ENCODE measurements at regions of chr1 and their contacts with region 1.

Region 1: DNA sequence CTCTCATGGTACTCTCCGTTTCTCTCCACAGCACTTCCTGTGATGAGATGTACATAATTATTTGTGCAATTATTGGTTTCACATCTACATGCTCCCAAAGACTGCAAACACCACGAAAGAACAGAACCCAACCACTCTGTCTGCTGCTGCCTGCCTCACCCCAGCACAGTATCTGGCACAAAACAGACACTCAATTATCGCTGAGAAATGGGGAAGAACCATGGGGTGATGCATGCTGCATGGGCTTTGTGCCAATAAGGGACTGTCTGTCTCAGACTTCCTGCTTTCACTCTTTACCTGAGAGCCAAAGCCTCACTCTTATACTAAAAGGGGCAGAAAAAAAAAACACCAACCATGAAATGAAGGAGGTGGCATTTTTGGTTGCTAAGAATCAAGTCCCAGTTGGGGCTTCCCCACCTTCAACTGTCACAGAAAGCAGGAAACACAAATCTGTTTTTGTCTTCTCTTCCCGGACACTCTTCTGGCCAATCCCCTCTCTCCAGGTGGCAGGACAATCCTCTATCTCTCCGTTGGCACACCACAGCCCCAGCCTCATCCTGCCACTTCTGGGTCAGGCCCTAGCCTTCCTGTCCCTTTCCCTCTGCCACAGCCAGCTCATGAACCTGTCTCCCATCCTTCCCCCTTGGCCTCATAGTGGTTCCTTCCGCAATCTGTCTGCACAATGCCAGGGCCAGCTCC is 82.0 kb downstream of the TGFBR3 start:
- DNase-seq: peak; percentile 56 to 95
- ATAC-seq: peak; percentile 58 to 79 (median 69)
- H3K4me3 ChIP-seq: peak overlapping the region; percentile 8
- H3K4me3 Mint-ChIP-seq: peak overlapping the region; percentile 78
- H3K27ac ChIP-seq: peak overlapping the region; percentile 97
- H3K27ac Mint-ChIP-seq: peak overlapping the region; percentile 95 to 96
- H3K4me1 ChIP-seq: peaks cover 63% of the 10 kb centered on the region
- H3K4me1 Mint-ChIP-seq: peaks cover 89 to 92% of the 10 kb centered on the region in 2 donors
- H3K27me3 ChIP-seq: no peaks in the 10 kb centered on the region
- H3K27me3 Mint-ChIP-seq: no peaks in the 10 kb centered on the region
- CTCF ChIP-seq: no peak

Region 2: GRCh38 chr1:91754348-91754747 is 49.6 kb before region 1 on chr1:
- intact Hi-C with region 1: loop called (anchors 2 kb)
- DNase-seq: no peak
- ATAC-seq: peak; percentile 32 to 61 (median 52)
- H3K4me3 ChIP-seq: no peak overlapping the region
- H3K4me3 Mint-ChIP-seq: peak overlapping the region; percentile 62
- H3K27ac ChIP-seq: peak overlapping the region; percentile 57
- H3K27ac Mint-ChIP-seq: peak overlapping the region; percentile 86 to 87
- H3K4me1 ChIP-seq: peaks cover 36% of the 10 kb centered on the region
- H3K4me1 Mint-ChIP-seq: peaks cover 70 to 76% of the 10 kb centered on the region in 2 donors
- H3K27me3 ChIP-seq: no peaks in the 10 kb centered on the region
- H3K27me3 Mint-ChIP-seq: no peaks in the 10 kb centered on the region
- CTCF ChIP-seq: no peak

Region 3: GRCh38 chr1:91764471-91765115 is 39.4 kb before region 1 on chr1:
- intact Hi-C with region 1: no loop called
- DNase-seq: no peak
- ATAC-seq: peak in 1 of 3 donors; percentile 11
- H3K4me3 ChIP-seq: no peak overlapping the region
- H3K4me3 Mint-ChIP-seq: peak overlapping the region; percentile 25
- H3K27ac ChIP-seq: no peak overlapping the region
- H3K27ac Mint-ChIP-seq: peak overlapping the region; percentile 82 to 87
- H3K4me1 ChIP-seq: peaks cover 17% of the 10 kb centered on the region
- H3K4me1 Mint-ChIP-seq: peaks cover 83 to 87% of the 10 kb centered on the region in 2 donors
- H3K27me3 ChIP-seq: no peaks in the 10 kb centered on the region
- H3K27me3 Mint-ChIP-seq: no peaks in the 10 kb centered on the region
- CTCF ChIP-seq: no peak

Region 4: GRCh38 chr1:91819038-91819788 is 15.2 kb after region 1 on chr1:
- intact Hi-C with region 1: loop called (anchors 2 kb)
- DNase-seq: no peak
- ATAC-seq: peak in 2 of 3 donors; percentile 41 to 57
- H3K4me3 ChIP-seq: no peak overlapping the region
- H3K4me3 Mint-ChIP-seq: peak overlapping the region; percentile 58
- H3K27ac ChIP-seq: no peak overlapping the region
- H3K27ac Mint-ChIP-seq: peak overlapping the region; percentile 70 to 95
- H3K4me1 ChIP-seq: peaks cover 44% of the 10 kb centered on the region
- H3K4me1 Mint-ChIP-seq: peaks cover 82 to 83% of the 10 kb centered on the region in 2 donors
- H3K27me3 ChIP-seq: no peaks in the 10 kb centered on the region
- H3K27me3 Mint-ChIP-seq: no peaks in the 10 kb centered on the region
- CTCF ChIP-seq: no peak

Region 5: GRCh38 chr1:91846007-91846617 is 42.1 kb after region 1 on chr1:
- intact Hi-C with region 1: no loop called
- DNase-seq: no peak
- ATAC-seq: peak; percentile 41 to 68 (median 61)
- H3K4me3 ChIP-seq: no peak overlapping the region
- H3K4me3 Mint-ChIP-seq: peak overlapping the region; percentile 73
- H3K27ac ChIP-seq: peak overlapping the region; percentile 21
- H3K27ac Mint-ChIP-seq: peak overlapping the region; percentile 69 to 89
- H3K4me1 ChIP-seq: peaks cover 47% of the 10 kb centered on the region
- H3K4me1 Mint-ChIP-seq: peaks cover 92 to 94% of the 10 kb centered on the region in 2 donors
- H3K27me3 ChIP-seq: no peaks in the 10 kb centered on the region
- H3K27me3 Mint-ChIP-seq: no peaks in the 10 kb centered on the region
- CTCF ChIP-seq: no peak

Region 6: DNA sequence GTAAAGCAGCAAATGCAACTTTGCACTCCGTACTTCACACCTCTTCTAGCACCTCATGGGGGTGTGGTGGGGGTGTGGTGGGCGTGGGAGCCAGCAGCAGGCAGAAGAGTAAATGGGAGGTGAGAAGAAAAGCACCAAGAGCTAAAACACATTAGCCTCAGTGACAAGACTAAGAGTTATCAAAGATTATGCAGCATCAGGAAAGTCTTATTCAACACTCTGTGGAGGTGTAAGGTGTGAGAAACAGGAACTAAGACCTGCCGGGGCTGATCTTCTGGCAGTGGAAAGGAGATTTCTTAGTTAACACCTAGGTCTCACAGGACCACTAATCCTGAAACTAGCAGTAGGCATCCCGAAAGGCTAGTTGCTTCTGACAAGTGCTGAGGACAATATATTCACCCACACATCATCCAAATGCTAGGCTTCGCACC is 72.1 kb after region 1 on chr1:
- intact Hi-C with region 1: loop called (anchors 2 kb)
- DNase-seq: peak; percentile 55 to 65
- ATAC-seq: peak; percentile 69 to 84 (median 82)
- H3K4me3 ChIP-seq: no peak overlapping the region
- H3K4me3 Mint-ChIP-seq: peak overlapping the region; percentile 68
- H3K27ac ChIP-seq: peak overlapping the region; percentile 12
- H3K27ac Mint-ChIP-seq: peak overlapping the region; percentile 85 to 91
- H3K4me1 ChIP-seq: peaks cover 75% of the 10 kb centered on the region
- H3K4me1 Mint-ChIP-seq: peaks cover 85 to 93% of the 10 kb centered on the region in 2 donors
- H3K27me3 ChIP-seq: no peaks in the 10 kb centered on the region
- H3K27me3 Mint-ChIP-seq: no peaks in the 10 kb centered on the region
- CTCF ChIP-seq: no peak

Measured in natural killer cell (primary cell).